Pancreas (tissue), 10 donors: ENCODE measurements at regions of chr3 and their contacts with region 1.

Region 1: GRCh38 chr3:50227390-50228183 is 8.4 kb upstream of the GNAI2 start:
- DNase-seq: peak; percentile 94 to 98 (median 95)
- ATAC-seq: peak; percentile 88 to 92 (median 91)
- H3K4me3 ChIP-seq: peak overlapping the region; percentile 43 to 65 (median 52)
- H3K27ac ChIP-seq: peak overlapping the region; percentile 68 to 84 (median 84)
- H3K4me1 ChIP-seq: peaks cover 0 to 7% (median 4%) of the 10 kb centered on the region in 3 donors
- H3K27me3 ChIP-seq: no peaks in the 10 kb centered on the region
- CTCF ChIP-seq: peak; percentile 78 to 93 (median 87)

Region 2: GRCh38 chr3:50272911-50273693 is 45.5 kb after region 1 on chr3:
- intact Hi-C with region 1: loop called in 2 of 3 experiments (anchors 5 kb)
- DNase-seq: peak; percentile 79 to 99 (median 92)
- ATAC-seq: peak; percentile 53 to 78 (median 69)
- H3K4me3 ChIP-seq: peak overlapping the region in 1 of 4 donors; percentile 26
- H3K27ac ChIP-seq: peak overlapping the region in 3 of 4 donors; percentile 2 to 93 (median 11)
- H3K4me1 ChIP-seq: peaks cover 9 to 19% (median 18%) of the 10 kb centered on the region in 3 donors
- H3K27me3 ChIP-seq: no peaks in the 10 kb centered on the region
- CTCF ChIP-seq: peak; percentile 96 to 98 (median 96)